RWPE1 (cell line): ENCODE measurements at regions of chr7 and their contacts with region 1.

Region 1: DNA sequence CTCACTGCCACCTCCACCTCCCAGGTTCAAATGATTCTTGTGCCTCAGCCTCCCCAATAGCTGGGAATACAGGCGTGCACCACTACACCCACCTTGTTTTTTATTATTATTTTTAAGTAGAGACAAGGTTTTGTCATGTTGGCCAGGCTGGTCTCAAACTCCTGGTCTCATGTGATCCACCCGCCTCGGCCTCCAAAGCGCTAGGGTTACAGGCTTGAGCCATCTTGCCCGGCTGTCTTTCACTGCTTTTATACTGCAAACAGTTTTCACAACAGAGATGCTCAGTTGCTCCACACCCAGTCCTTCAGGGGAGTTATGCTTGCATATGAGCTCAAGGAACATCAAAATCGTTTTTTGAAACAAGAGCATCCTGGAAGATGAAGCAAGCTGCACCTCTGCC is 1.3 kb upstream of the PRR15 start:
- DNase-seq: no peak
- H3K27ac ChIP-seq: no peak overlapping the region
- CTCF ChIP-seq: no peak

Region 2: DNA sequence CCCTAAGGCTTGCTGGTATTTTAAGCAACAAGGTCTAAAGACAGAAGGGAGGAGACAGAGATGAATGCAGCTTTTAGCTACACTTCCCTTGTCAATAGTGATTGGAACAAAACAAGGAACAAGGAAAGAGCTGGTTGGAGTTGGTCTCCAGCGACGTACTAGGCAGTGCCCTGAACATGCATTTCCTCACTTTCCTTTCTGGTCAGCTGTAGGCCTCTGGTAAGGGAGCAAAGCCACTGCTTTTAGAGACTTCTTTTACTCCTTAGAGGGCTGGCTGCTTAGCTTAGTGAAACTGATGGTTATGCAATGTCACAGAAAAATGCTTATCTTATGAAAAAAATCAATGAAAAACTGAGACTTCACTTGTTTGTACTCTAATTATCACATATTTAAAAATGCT is 528.7 kb before region 1 on chr7:
- CTCF ChIA-PET with region 1: interaction called, 10 read pairs
- POLR2A ChIA-PET with region 1: no interaction called
- DNase-seq: no peak
- H3K27ac ChIP-seq: no peak overlapping the region
- CTCF ChIP-seq: no peak

Region 3: GRCh38 chr7:29488977-29489376 is 73.3 kb before region 1 on chr7:
- CTCF ChIA-PET with region 1: no interaction called
- POLR2A ChIA-PET with region 1: no interaction called
- DNase-seq: peak; percentile 13
- H3K27ac ChIP-seq: no peak overlapping the region
- CTCF ChIP-seq: no peak

Region 4: GRCh38 chr7:29508608-29509007 is 53.7 kb before region 1 on chr7:
- CTCF ChIA-PET with region 1: no interaction called
- POLR2A ChIA-PET with region 1: no interaction called
- DNase-seq: no peak
- H3K27ac ChIP-seq: no peak overlapping the region
- CTCF ChIP-seq: no peak

Region 5: DNA sequence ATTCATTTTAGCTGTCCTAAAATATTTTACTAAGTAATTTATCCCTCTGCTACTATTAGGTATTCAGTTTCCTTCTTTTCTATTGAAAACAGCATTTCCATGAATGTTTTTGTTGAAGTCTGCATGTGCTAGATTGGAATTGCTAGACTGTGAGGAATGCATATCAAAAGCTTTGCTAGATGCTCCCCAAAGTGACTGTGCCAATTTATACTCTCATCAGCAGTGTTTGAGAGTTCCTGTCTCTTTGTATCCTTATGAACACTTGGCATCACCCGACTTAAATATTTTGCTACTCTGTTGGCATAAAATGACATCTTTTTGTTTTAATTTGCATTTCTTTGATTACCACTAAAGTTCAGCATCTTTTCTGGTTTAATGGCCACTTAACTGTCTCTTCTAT is 43.7 kb before region 1 on chr7:
- CTCF ChIA-PET with region 1: no interaction called
- POLR2A ChIA-PET with region 1: no interaction called
- DNase-seq: no peak
- H3K27ac ChIP-seq: no peak overlapping the region
- CTCF ChIP-seq: no peak

Region 6: DNA sequence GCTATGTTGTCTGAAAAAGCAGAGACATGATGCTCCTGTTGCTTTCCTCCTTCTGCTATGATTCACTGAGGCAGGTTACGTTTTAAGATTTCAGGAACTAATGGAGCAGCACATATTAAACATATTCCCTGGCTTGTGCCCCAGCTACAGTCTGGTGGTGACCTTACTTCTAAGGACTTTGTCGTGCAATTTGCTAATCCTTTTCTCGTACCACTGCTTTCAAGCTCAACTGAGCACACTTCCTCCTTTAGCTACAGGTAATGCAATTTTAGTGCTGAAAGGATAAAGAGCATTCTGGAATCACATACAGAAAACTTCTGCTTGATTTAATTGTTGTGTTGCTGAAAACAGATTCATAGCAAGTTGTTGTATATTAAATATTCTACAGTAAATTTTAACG is 14.8 kb before region 1 on chr7:
- CTCF ChIA-PET with region 1: no interaction called
- POLR2A ChIA-PET with region 1: no interaction called
- DNase-seq: no peak
- H3K27ac ChIP-seq: no peak overlapping the region
- CTCF ChIP-seq: no peak